ENCODE measurements at regions of chr18 and their contacts with region 1.

Region 1: GRCh38 chr18:76803814-76804213 is 18.5 kb upstream of the ZNF236 start:
- DNase-seq: peak; percentile 87
- H3K4me3 Mint-ChIP-seq: peak overlapping the region; percentile 15
- H3K27ac Mint-ChIP-seq: no peak overlapping the region
- H3K4me1 Mint-ChIP-seq: peaks cover 9% of the 10 kb centered on the region
- H3K27me3 Mint-ChIP-seq: peaks cover 5% of the 10 kb centered on the region

Region 2: GRCh38 chr18:76822510-76823160 is 18.8 kb after region 1 on chr18 and contains the start of gene ZNF236:
- CTCF ChIA-PET with region 1: interaction called, 49 read pairs
- intact Hi-C with region 1: loop called (anchors 2 kb)
- DNase-seq: peak; percentile 57
- H3K4me3 Mint-ChIP-seq: peak within 1 kb of the TSS; percentile 90
- H3K27ac Mint-ChIP-seq: peak within 1 kb of the TSS; percentile 92
- H3K4me1 Mint-ChIP-seq: peaks cover 51% of the 10 kb centered on the region
- H3K27me3 Mint-ChIP-seq: no peaks in the 10 kb centered on the region
- total RNA-seq, gene ZNF236: 13.7 to 17.7 TPM

Region 3: GRCh38 chr18:76875390-76876325 is 71.8 kb after region 1 on chr18:
- CTCF ChIA-PET with region 1: interaction called, 7 read pairs
- intact Hi-C with region 1: loop called (anchors 1 kb)
- DNase-seq: peak; percentile 65
- H3K4me3 Mint-ChIP-seq: no peak overlapping the region
- H3K27ac Mint-ChIP-seq: no peak overlapping the region
- H3K4me1 Mint-ChIP-seq: peaks cover 14% of the 10 kb centered on the region
- H3K27me3 Mint-ChIP-seq: no peaks in the 10 kb centered on the region

Region 4: GRCh38 chr18:76977108-76977621 is 173.4 kb after region 1 on chr18:
- CTCF ChIA-PET with region 1: interaction called, 117 read pairs
- intact Hi-C with region 1: no loop called
- DNase-seq: no peak
- H3K4me3 Mint-ChIP-seq: no peak overlapping the region
- H3K27ac Mint-ChIP-seq: no peak overlapping the region
- H3K4me1 Mint-ChIP-seq: no peaks in the 10 kb centered on the region
- H3K27me3 Mint-ChIP-seq: no peaks in the 10 kb centered on the region

Region 5: GRCh38 chr18:77207540-77207939 is 403.7 kb after region 1 on chr18:
- CTCF ChIA-PET with region 1: interaction called, 6 read pairs
- intact Hi-C with region 1: loop called (anchors 2 kb)
- DNase-seq: peak; percentile 74
- H3K4me3 Mint-ChIP-seq: no peak overlapping the region
- H3K27ac Mint-ChIP-seq: peak overlapping the region; percentile 71
- H3K4me1 Mint-ChIP-seq: peaks cover 32% of the 10 kb centered on the region
- H3K27me3 Mint-ChIP-seq: no peaks in the 10 kb centered on the region

Region 6: GRCh38 chr18:78363556-78364387 is 1560.0 kb after region 1 on chr18:
- CTCF ChIA-PET with region 1: no interaction called
- intact Hi-C with region 1: no loop called
- DNase-seq: no peak
- H3K4me3 Mint-ChIP-seq: no peak overlapping the region
- H3K27ac Mint-ChIP-seq: no peak overlapping the region
- H3K4me1 Mint-ChIP-seq: no peaks in the 10 kb centered on the region
- H3K27me3 Mint-ChIP-seq: no peaks in the 10 kb centered on the region